WTC11 (cell line): ENCODE measurements at regions of chr17 and their contacts with region 1.

Region 1: GRCh38 chr17:55487695-55488429 is 23.4 kb downstream of the SMIM36 start:
- DNase-seq: no peak
- ATAC-seq: peak; percentile 24; the same call in 1 of the 2 replicates
- H3K4me3 Mint-ChIP-seq: no peak overlapping the region
- H3K27ac Mint-ChIP-seq: no peak overlapping the region
- H3K4me1 Mint-ChIP-seq: peaks cover 18% of the 10 kb centered on the region
- H3K27me3 Mint-ChIP-seq: no peaks in the 10 kb centered on the region; the same call in 1 of the 2 replicates
- CTCF ChIP-seq: no peak

Region 2: DNA sequence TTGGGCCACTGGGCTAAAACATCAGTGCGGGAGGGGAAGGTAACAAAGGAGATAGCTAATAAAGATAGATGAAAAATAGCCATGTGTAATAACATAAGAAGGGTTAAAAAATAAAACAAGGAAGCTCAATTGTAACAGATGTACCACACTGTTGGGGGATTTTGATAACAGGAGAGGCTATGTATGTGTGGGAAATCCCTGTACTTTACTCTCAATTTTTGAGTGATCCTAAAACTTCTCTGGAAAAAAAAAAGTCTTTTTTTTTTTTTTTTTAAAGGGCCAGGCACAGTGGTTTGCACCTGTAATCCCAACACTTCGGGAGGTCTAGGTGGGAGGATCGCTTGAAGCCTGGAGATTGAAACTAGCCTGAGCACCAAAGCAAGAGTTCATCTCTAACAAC is 64.3 kb before region 1 on chr17:
- CTCF ChIA-PET with region 1: no interaction called
- POLR2A ChIA-PET with region 1: interaction called, 11 read pairs
- DNase-seq: no peak
- ATAC-seq: no peak
- H3K4me3 Mint-ChIP-seq: no peak overlapping the region
- H3K27ac Mint-ChIP-seq: no peak overlapping the region
- H3K4me1 Mint-ChIP-seq: peaks cover 33% of the 10 kb centered on the region
- H3K27me3 Mint-ChIP-seq: no peaks in the 10 kb centered on the region
- CTCF ChIP-seq: no peak